Prostate gland (tissue), 2 donors: ENCODE measurements at regions of chr17 and their contacts with region 1.

Region 1: GRCh38 chr17:43211480-43212402 is at the start of gene TMEM106A:
- DNase-seq: peak; percentile 79
- H3K4me3 ChIP-seq: peak within 1 kb of the TSS; percentile 40
- H3K27ac ChIP-seq: peak within 1 kb of the TSS; percentile 77 to 83
- H3K4me1 ChIP-seq: peaks cover 5% of the 10 kb centered on the region
- H3K27me3 ChIP-seq: no peaks in the 10 kb centered on the region
- CTCF ChIP-seq: peak in 2 of 4 experiments; percentile 14 to 23
- POLR2A ChIP-seq: peak; percentile 65
- total RNA-seq, gene TMEM106A: 2.6 to 8.0 TPM

Region 2: DNA sequence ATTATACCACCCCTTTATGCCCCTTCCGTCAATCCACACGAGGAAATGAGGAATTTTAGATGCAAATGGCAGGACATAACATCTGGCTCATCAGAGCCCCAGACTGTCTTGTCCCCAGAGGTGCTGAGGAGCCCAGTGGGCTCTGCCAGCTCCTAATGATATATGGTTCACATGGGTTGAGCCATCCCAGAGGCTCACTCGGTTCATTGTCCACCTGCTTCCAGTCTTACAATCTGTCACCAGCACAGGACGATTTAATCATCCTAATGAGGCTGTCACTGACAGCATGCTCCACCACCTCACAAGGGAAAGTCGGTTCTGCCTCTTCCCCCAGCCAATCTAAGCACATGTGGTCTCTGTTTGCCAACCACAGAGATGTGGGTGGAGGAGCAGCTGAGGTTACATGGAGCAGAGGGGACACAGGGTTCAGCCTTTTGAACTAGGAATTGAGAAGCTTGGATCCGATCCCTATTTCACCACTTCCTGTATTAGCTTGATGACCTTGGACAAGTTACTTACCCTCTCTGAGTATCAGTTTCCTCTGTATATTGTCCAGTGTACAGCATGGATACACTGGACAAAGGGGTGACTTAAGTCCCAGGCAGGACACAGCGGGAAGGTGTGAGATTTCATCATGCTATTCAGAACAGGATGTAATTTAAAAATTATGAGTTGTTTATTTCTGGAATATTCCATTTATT is 245.1 kb after region 1 on chr17:
- intact Hi-C with region 1: no loop called
- DNase-seq: no peak
- H3K4me3 ChIP-seq: no peak overlapping the region
- H3K27ac ChIP-seq: no peak overlapping the region
- H3K4me1 ChIP-seq: no peaks in the 10 kb centered on the region
- H3K27me3 ChIP-seq: no peaks in the 10 kb centered on the region
- CTCF ChIP-seq: no peak
- POLR2A ChIP-seq: no peak

Region 3: DNA sequence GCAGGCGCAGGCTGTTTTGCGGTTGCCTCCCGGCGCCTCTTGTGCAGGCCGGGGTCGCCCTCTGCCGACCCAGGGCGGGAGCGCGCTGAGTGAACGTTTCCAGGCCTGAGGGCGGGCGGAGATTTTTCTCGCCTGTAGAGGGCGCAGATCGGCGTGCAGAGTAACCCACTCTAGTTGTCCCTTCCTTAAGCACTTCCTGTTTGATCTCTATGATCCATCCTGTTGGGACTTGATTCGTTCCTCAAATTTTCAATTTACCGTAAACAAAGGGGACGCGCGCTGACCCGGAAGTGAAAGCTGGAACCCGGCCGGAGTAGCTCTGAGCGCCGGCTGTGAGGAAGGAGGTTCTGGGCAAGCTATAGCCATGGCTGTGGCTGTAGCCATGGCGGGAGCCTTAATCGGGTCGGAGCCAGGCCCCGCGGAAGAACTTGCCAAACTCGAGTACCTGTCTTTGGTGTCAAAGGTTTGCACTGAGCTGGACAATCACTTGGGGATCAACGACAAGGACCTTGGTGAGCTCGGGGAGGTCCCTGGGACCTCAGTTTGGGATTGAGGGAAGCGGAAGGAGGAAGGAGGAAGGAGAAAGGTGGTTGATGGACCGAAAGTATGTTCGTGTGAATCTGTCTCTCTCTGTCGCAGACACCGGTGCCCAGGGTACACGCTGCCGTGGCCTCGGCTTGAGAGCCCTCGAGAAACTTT is 272.1 kb after region 1 on chr17 and contains the start of gene DHX8:
- intact Hi-C with region 1: loop called (anchors 10 kb)
- DNase-seq: peak; percentile 95
- H3K4me3 ChIP-seq: peak within 1 kb of the TSS; percentile 54 to 70
- H3K27ac ChIP-seq: peak within 1 kb of the TSS; percentile 76 to 81
- H3K4me1 ChIP-seq: peaks cover 7% of the 10 kb centered on the region
- H3K27me3 ChIP-seq: no peaks in the 10 kb centered on the region
- CTCF ChIP-seq: peak; percentile 99 to 100 (median 100)
- POLR2A ChIP-seq: peak; percentile 49
- total RNA-seq, gene DHX8: 35.7 to 52.9 TPM